Dendritic cell treated with granulocyte-macrophage colony-stimulating factor and Interleukin-4, amounts not matched to agents 40 ng/mL and 50 ng/mL, for 4 days (primary cell): ENCODE measurements at regions of chr13 and their contacts with region 1.

Region 1: GRCh38 chr13:36999054-36999714 is at the start of gene ALG5:
- H3K4me3 Mint-ChIP-seq: peak within 1 kb of the TSS; percentile 100
- H3K27ac Mint-ChIP-seq: peak within 1 kb of the TSS; percentile 99
- H3K4me1 Mint-ChIP-seq: peaks cover 24% of the 10 kb centered on the region
- H3K27me3 Mint-ChIP-seq: no peaks in the 10 kb centered on the region

Region 2: DNA sequence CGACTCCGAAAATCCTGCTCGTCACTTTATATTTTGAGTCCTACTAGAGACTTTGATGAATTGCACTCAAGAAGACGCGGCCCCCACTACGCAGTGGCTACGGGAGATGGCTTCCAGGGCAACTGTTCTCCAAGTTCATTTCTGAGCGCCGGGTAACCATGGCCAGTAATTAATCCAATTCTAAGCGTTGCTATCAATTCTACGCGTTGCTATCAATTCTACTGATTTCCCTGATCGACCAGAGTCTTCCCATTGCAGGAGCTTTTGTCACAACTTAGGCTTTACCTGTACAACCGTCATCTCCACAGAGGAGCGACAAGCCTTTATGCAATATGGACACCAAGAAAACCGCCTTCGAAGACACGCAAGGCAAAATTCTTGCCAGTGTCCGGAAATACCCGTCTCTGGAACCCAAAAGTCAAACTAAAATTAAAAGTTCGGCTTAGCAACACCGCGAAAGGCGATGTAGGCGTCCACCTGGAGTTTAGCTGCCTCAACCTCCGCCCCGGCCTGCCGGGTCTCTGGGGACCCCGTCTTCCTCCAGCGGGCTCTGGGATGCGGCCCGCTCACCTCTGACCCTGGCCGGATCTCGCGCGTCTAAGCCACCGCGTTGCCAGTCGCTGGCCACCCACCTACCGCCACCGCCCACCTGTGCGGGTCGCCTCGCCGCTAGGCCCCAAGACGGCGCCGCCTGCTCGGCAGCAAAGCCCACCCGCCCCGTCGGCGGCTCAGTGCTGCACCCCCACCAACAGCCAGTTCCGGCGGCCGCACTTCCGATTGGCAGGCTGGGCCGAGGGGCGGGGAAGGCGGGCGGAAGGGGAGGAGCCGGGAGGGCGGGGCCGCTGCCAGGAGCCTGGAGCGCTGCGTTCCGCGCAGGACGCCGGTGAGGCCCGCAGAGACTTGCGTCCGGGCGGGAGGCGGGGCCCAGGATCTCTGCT is 60.0 kb after region 1 on chr13 and contains the start of gene SUPT20H:
- intact Hi-C with region 1: loop called (anchors 2 kb)
- H3K4me3 Mint-ChIP-seq: peak within 1 kb of the TSS; percentile 93
- H3K27ac Mint-ChIP-seq: peak within 1 kb of the TSS; percentile 94
- H3K4me1 Mint-ChIP-seq: peaks cover 32% of the 10 kb centered on the region
- H3K27me3 Mint-ChIP-seq: peaks cover 2% of the 10 kb centered on the region